Heart left ventricle (tissue), 16 donors: ENCODE measurements at regions of chr5 and their contacts with region 1.

Region 1: DNA sequence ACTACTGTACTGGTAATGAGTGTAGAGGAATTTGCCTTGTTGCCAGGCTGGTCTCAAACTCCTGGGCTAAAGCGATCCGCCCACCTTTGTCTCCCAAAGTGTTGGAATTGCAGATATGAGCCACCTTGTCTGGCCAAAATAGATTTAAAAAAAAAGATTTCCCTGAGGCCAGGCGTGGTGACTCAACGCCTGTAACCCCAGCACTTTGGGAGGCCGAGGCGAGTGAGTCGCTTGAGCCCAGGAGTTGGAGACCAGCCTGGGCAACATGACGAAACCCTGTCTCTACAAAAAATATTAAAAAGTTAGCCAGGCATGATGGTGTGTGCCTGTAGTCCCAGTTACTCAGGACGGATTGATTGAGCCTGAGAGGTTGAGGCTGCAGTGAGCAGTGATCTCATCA is 62.5 kb downstream of the IPO11 start:
- DNase-seq: no peak
- ATAC-seq: no peak
- H3K4me3 ChIP-seq: no peak overlapping the region
- H3K27ac ChIP-seq: no peak overlapping the region
- H3K4me1 ChIP-seq: no peaks in the 10 kb centered on the region
- H3K27me3 ChIP-seq: no peaks in the 10 kb centered on the region
- CTCF ChIP-seq: no peak
- POLR2A ChIP-seq: no peak

Region 2: DNA sequence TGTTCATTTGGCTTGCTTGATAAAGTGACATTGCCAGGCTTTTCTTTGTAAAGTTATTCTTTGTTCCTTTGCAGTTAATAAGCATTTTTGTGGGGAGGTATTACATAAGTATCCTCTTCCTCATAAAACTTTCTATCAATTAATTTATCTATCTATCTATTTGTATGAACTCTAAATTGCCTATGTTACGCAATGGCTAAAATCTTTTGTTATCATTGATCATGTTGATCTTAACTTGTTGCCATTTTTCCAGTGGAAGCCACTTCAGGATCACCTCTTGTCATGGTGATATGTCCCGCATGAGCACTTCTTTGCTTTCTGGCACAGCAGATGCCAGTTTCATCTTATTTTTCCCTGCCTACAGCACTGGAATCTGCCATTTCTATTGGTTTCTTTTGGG is 605.7 kb before region 1 on chr5:
- intact Hi-C with region 1: no loop called
- DNase-seq: no peak
- ATAC-seq: no peak
- H3K4me3 ChIP-seq: no peak overlapping the region
- H3K27ac ChIP-seq: no peak overlapping the region
- H3K4me1 ChIP-seq: no peaks in the 10 kb centered on the region
- H3K27me3 ChIP-seq: no peaks in the 10 kb centered on the region
- CTCF ChIP-seq: no peak
- POLR2A ChIP-seq: no peak

Region 3: DNA sequence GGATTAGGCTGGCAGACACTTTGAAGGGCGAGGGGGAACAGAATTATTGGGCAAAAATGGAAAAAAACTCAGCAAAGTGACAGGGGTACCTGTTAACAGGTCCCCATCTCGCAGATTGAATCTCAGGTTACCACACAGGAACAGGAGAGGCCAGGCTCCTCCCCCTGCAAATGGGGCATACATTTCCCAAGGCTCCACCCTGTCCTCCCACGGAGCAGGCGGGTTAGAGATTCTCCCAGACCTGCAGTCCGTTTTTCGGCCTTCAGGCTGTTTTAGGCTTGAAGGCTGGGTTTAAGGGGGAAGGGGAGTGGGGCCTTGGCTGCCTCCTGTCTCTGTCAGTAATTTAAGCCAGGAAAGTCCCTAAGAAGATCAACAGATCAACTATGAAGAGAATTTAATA is 146.2 kb after region 1 on chr5:
- intact Hi-C with region 1: loop called in 1 of 10 experiments (anchors 10 kb)
- DNase-seq: no peak
- ATAC-seq: no peak
- H3K4me3 ChIP-seq: no peak overlapping the region
- H3K27ac ChIP-seq: no peak overlapping the region
- H3K4me1 ChIP-seq: peaks cover 0 to 6% (median 0%) of the 10 kb centered on the region in 12 donors
- H3K27me3 ChIP-seq: no peaks in the 10 kb centered on the region
- CTCF ChIP-seq: no peak
- POLR2A ChIP-seq: no peak

Region 4: GRCh38 chr5:63245271-63245670 is 770.2 kb after region 1 on chr5:
- intact Hi-C with region 1: no loop called
- DNase-seq: no peak
- ATAC-seq: no peak
- H3K4me3 ChIP-seq: no peak overlapping the region
- H3K27ac ChIP-seq: no peak overlapping the region
- H3K4me1 ChIP-seq: no peaks in the 10 kb centered on the region
- H3K27me3 ChIP-seq: no peaks in the 10 kb centered on the region
- CTCF ChIP-seq: no peak
- POLR2A ChIP-seq: no peak